Transverse colon (tissue), 4 donors: ENCODE measurements at regions of chr11 and their contacts with region 1.

Region 1: GRCh38 chr11:6682936-6683861 is at the start of gene MRPL17:
- DNase-seq: peak; percentile 99
- H3K4me3 ChIP-seq: peak within 1 kb of the TSS; percentile 73 to 86 (median 79)
- H3K27ac ChIP-seq: peak within 1 kb of the TSS; percentile 83 to 94 (median 90)
- H3K4me1 ChIP-seq: peaks cover 8 to 23% (median 14%) of the 10 kb centered on the region in 4 donors
- H3K27me3 ChIP-seq: no peaks in the 10 kb centered on the region
- CTCF ChIP-seq: peak; percentile 83 to 96 (median 90)
- EP300 ChIP-seq: no peak
- POLR2A ChIP-seq: peak; percentile 72
- total RNA-seq, gene MRPL17: 9.3 to 62.9 (median 14.2) TPM

Region 2: GRCh38 chr11:6531267-6531752 is 151.9 kb before region 1 on chr11:
- in situ Hi-C with region 1: loop called in 1 of 4 experiments (anchors 10 kb)
- intact Hi-C with region 1: loop called (anchors 10 kb)
- DNase-seq: no peak
- H3K4me3 ChIP-seq: no peak overlapping the region
- H3K27ac ChIP-seq: no peak overlapping the region
- H3K4me1 ChIP-seq: no peaks in the 10 kb centered on the region
- H3K27me3 ChIP-seq: no peaks in the 10 kb centered on the region
- CTCF ChIP-seq: peak; percentile 66 to 81 (median 74)
- EP300 ChIP-seq: no peak
- POLR2A ChIP-seq: no peak

Region 3: DNA sequence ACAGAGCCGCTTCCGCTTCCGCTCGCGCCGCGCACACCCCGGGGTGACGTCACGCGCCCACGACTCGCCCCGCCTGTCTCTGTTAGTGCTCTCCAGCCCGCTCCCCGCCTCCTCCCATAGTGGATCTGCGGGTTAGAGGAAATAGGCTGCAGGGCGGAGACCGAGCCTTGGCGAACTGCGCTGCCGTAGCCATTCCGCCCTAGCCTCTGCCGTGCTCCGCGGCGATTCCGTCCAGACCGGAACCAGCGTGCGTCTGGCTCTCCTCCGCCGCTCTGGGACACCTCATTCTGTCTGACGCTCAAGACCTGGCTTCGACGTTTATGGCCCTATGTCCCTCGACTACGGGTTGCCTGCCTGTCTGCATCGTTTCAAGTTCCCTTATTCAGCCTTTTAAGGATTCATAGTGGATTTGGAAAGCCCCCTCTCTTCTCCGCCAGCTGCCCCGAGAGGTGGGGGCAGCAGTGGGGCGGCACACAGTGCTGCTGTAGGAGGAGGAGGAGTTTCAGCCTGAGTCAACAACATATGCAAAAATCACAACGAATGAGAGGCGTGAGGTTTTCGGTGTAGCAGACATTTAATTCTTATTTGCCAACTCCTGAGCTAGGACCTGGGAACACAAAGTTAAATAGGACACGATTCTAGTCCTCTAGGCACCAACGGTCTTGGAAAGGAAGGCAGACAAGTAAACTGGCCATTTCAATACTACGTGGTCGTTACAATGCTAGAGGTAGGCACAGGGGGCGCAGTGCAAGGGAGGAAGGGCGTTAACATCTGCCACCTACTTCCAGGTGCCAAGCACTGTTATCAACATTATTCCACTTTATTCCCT is 70.8 kb before region 1 on chr11 and contains the start of gene TAF10:
- in situ Hi-C with region 1: loop called in 1 of 4 experiments (anchors 5 kb)
- intact Hi-C with region 1: loop called (anchors 5 kb)
- DNase-seq: peak; percentile 98
- H3K4me3 ChIP-seq: peak within 1 kb of the TSS; percentile 61 to 83 (median 76)
- H3K27ac ChIP-seq: peak within 1 kb of the TSS; percentile 96 to 99 (median 97)
- H3K4me1 ChIP-seq: peaks cover 19 to 58% (median 36%) of the 10 kb centered on the region in 4 donors
- H3K27me3 ChIP-seq: no peaks in the 10 kb centered on the region
- CTCF ChIP-seq: peak; percentile 45 to 82 (median 52)
- EP300 ChIP-seq: peak; percentile 41
- POLR2A ChIP-seq: peak; percentile 97
- total RNA-seq, gene TAF10: 35.7 to 114 (median 53.8) TPM

Region 4: GRCh38 chr11:6619004-6619745 is 64.0 kb before region 1 on chr11 and contains the start of gene TPP1:
- in situ Hi-C with region 1: loop called in 1 of 4 experiments (anchors 5 kb)
- intact Hi-C with region 1: loop called (anchors 5 kb)
- DNase-seq: peak; percentile 95
- H3K4me3 ChIP-seq: peak within 1 kb of the TSS; percentile 48 to 93 (median 65)
- H3K27ac ChIP-seq: peak within 1 kb of the TSS; percentile 88 to 91 (median 91)
- H3K4me1 ChIP-seq: peaks cover 4 to 24% (median 17%) of the 10 kb centered on the region in 4 donors
- H3K27me3 ChIP-seq: no peaks in the 10 kb centered on the region
- CTCF ChIP-seq: no peak
- EP300 ChIP-seq: no peak
- POLR2A ChIP-seq: peak; percentile 85
- total RNA-seq, gene TPP1: 64.0 to 114 (median 74.0) TPM

Region 5: DNA sequence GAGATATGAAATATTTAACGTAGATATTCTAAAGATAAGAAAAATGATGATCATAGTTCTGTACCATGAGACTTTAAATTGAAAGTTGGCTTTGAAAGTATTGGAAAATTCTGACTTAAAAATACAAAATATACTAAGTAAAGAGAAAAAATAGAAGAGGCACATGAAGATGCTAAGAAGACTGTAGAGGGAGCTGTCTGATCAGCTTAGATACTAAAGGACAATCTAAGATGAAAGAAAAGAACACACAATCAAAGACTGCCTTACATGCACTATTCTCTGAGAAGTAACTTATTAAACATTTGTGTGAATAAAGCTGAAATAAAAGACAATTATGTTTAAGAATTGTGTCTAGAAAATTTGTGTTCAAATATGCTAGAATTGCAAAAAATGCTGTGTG is 460.7 kb after region 1 on chr11:
- in situ Hi-C with region 1: no loop called
- intact Hi-C with region 1: no loop called
- DNase-seq: no peak
- H3K4me3 ChIP-seq: no peak overlapping the region
- H3K27ac ChIP-seq: no peak overlapping the region
- H3K4me1 ChIP-seq: no peaks in the 10 kb centered on the region
- H3K27me3 ChIP-seq: no peaks in the 10 kb centered on the region
- CTCF ChIP-seq: peak in 2 of 5 experiments; percentile 11 to 25
- EP300 ChIP-seq: no peak
- POLR2A ChIP-seq: no peak